ENCODE measurements at regions of chrX and their contacts with region 1.

Region 1: DNA sequence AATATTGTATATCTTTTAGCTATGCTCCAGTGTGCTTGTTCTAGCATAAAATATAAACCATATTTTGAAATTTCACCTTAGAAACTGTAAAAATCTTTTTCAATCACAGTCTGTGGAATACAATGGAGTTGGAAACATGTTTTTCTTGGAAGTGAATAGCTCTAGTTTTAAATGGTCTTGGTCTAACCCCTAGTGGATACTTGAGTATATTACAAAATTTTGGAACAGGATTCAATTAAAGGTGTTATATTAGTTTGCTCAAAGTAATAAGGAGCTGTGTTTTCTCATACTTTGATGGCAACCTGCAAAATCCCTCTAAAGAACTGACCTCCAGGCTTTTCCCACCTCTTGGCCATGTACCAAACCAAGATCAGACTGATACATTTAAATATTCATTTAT is 48.2 kb downstream of the STK26 start:
- DNase-seq: no peak
- H3K4me3 ChIP-seq: no peak overlapping the region
- H3K27ac ChIP-seq: no peak overlapping the region
- H3K4me1 ChIP-seq: no peaks in the 10 kb centered on the region
- H3K27me3 ChIP-seq: no peaks in the 10 kb centered on the region
- CTCF ChIP-seq: peak in 2 of 4 experiments; percentile 41 to 49
- POLR2A ChIP-seq: no peak

Region 2: DNA sequence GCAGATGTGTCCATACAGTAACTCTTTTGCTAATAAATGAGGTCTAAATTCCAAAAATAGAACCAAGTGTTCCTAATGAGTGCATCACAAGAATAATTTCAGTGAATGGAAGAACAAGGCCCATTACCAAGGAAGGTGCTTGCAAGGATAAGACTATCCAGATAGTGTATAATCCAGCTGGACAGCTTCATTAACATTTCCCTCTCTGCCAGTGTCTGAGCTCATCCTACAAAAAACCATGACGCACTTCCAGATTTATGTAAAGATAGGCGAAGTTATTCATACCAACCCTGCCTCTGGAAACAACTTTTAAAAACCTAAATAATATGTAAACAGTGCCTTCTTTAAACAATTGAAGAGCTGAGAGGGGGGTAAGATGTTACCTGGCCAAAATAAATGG is 226.1 kb before region 1 on chrX:
- intact Hi-C with region 1: loop called (anchors 5 kb)
- DNase-seq: no peak
- H3K4me3 ChIP-seq: no peak overlapping the region
- H3K27ac ChIP-seq: no peak overlapping the region
- H3K4me1 ChIP-seq: no peaks in the 10 kb centered on the region
- H3K27me3 ChIP-seq: no peaks in the 10 kb centered on the region
- CTCF ChIP-seq: no peak
- POLR2A ChIP-seq: no peak

Region 3: GRCh38 chrX:131987252-131987651 is 84.0 kb before region 1 on chrX:
- intact Hi-C with region 1: no loop called
- DNase-seq: no peak
- H3K4me3 ChIP-seq: no peak overlapping the region
- H3K27ac ChIP-seq: no peak overlapping the region
- H3K4me1 ChIP-seq: no peaks in the 10 kb centered on the region
- H3K27me3 ChIP-seq: no peaks in the 10 kb centered on the region
- CTCF ChIP-seq: no peak
- POLR2A ChIP-seq: no peak